Caco-2 (cell line): ENCODE measurements at regions of chr17 and their contacts with region 1.

Region 1: GRCh38 chr17:67035131-67036083 is 8.9 kb upstream of the CACNG1 start:
- DNase-seq: no peak
- H3K4me3 ChIP-seq: no peak overlapping the region
- H3K4me3 Mint-ChIP-seq: no peak overlapping the region
- H3K27ac Mint-ChIP-seq: no peak overlapping the region
- H3K4me1 ChIP-seq: peaks cover 28% of the 10 kb centered on the region
- H3K4me1 Mint-ChIP-seq: peaks cover 27% of the 10 kb centered on the region
- H3K27me3 ChIP-seq: no peaks in the 10 kb centered on the region
- H3K27me3 Mint-ChIP-seq: no peaks in the 10 kb centered on the region
- CTCF ChIP-seq: no peak

Region 2: DNA sequence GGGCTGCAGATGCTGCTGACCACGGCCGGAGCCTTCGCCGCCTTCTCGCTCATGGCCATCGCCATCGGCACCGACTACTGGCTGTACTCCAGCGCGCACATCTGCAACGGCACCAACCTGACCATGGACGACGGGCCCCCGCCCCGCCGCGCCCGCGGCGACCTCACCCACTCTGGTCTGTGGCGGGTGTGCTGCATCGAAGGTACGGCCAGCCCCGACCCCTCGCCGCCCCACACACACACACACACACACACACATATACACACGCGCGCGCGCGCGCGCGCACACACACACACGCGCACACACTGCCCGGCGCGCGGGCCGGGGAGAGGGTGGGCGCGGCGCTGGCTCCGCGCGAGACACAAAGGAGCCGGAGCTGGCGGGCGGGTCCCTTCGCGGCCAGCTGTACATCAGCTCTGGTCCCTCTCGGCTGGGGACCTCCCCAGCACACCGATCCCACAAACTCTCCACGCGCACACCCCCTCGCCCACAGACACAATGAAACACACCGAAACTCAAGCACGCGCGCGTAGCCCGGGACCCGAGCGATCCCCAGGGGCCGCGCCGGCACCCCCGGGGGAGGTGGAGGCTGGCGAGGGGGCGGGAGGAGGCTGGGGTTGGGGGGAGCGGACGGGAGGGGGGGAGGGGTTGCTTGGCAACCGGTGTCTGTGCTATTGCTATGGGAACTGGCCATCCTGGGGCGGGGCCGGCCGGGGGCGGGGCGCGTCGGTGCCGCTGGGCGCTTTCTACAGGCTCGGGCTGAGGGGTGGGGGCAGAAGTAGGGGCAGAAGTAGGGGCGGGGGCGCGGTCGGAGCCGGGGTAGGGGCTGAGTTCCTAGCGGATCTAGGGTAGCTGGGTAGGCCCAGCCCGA is 70.2 kb before region 1 on chr17:
- CTCF ChIA-PET with region 1: no interaction called
- POLR2A ChIA-PET with region 1: no interaction called
- intact Hi-C with region 1: loop called (anchors 5 kb)
- DNase-seq: peak; percentile 75 to 81
- H3K4me3 ChIP-seq: peak overlapping the region; percentile 66
- H3K4me3 Mint-ChIP-seq: peak overlapping the region; percentile 69
- H3K27ac Mint-ChIP-seq: no peak overlapping the region
- H3K4me1 ChIP-seq: peaks cover 38% of the 10 kb centered on the region
- H3K4me1 Mint-ChIP-seq: peaks cover 25% of the 10 kb centered on the region
- H3K27me3 ChIP-seq: no peaks in the 10 kb centered on the region
- H3K27me3 Mint-ChIP-seq: no peaks in the 10 kb centered on the region
- CTCF ChIP-seq: no peak

Region 3: GRCh38 chr17:67400193-67400592 is 364.8 kb after region 1 on chr17:
- CTCF ChIA-PET with region 1: no interaction called
- POLR2A ChIA-PET with region 1: no interaction called
- intact Hi-C with region 1: no loop called
- DNase-seq: no peak
- H3K4me3 ChIP-seq: no peak overlapping the region
- H3K4me3 Mint-ChIP-seq: no peak overlapping the region
- H3K27ac Mint-ChIP-seq: no peak overlapping the region
- H3K4me1 ChIP-seq: no peaks in the 10 kb centered on the region
- H3K4me1 Mint-ChIP-seq: no peaks in the 10 kb centered on the region
- H3K27me3 ChIP-seq: no peaks in the 10 kb centered on the region
- H3K27me3 Mint-ChIP-seq: no peaks in the 10 kb centered on the region
- CTCF ChIP-seq: no peak